T-cell (primary cell): ENCODE measurements at regions of chr1 and their contacts with region 1.

Region 1: DNA sequence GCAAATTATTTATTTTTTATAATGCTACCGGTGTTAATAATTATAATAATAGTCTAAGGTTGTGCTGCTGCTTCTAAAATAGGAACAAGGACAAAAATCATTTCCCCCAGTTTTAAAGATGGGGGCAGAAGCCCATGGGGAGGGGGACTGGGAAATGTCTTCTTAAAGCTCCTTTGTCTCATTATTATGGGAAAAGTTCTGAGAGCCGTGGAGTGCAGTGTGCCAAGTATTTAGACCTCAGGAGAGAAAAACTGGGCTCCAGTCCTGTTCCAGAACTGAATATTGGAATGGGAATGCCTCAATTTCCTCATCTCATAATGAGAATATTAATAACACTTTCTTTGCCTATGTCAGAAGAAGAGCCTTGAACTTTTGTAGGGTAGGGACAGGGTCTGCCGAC is 40.9 kb upstream of the ATF3 start:
- DNase-seq: no peak
- ATAC-seq: no peak
- H3K4me3 ChIP-seq: no peak overlapping the region
- H3K4me3 Mint-ChIP-seq: peak overlapping the region in 2 of 3 donors; percentile 82 to 90
- H3K27ac ChIP-seq: no peak overlapping the region
- H3K27ac Mint-ChIP-seq: no peak overlapping the region
- H3K4me1 ChIP-seq: peaks cover 3 to 9% of the 10 kb centered on the region in 2 experiments
- H3K4me1 Mint-ChIP-seq: peaks cover 15 to 21% (median 18%) of the 10 kb centered on the region in 3 donors
- H3K27me3 ChIP-seq: no peaks in the 10 kb centered on the region
- H3K27me3 Mint-ChIP-seq: no peaks in the 10 kb centered on the region

Region 2: DNA sequence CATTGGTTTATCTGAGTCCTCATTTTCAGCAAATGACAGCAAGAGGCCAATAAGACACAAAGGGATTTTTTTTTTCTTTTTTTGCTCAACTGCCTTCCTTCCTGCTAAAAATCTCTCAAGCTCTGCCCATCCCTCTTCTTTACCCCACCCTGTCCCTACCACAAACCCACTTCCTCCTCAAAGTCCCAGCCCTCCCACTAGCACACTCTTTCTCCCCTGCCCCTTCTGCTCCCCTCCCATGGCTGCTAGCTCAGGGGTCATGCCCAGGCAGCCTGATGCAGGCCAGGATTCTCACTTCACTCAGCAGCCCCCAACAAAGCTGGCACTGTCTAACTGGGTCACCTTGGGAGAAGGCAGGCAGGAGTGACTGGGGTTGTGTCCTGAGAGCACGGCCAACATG is 311.3 kb before region 1 on chr1:
- CTCF ChIA-PET with region 1: no interaction called
- POLR2A ChIA-PET with region 1: no interaction called
- DNase-seq: peak in 32 of 35 experiments; percentile 5 to 68 (median 22)
- ATAC-seq: peak; percentile 80 to 89 (median 82)
- H3K4me3 ChIP-seq: no peak overlapping the region
- H3K4me3 Mint-ChIP-seq: peak overlapping the region in 2 of 3 donors; percentile 44 to 81
- H3K27ac ChIP-seq: peak overlapping the region; percentile 64
- H3K27ac Mint-ChIP-seq: peak overlapping the region; percentile 76
- H3K4me1 ChIP-seq: peaks cover 36 to 59% of the 10 kb centered on the region in 2 experiments
- H3K4me1 Mint-ChIP-seq: peaks cover 69 to 89% (median 84%) of the 10 kb centered on the region in 3 donors
- H3K27me3 ChIP-seq: no peaks in the 10 kb centered on the region
- H3K27me3 Mint-ChIP-seq: no peaks in the 10 kb centered on the region

Region 3: GRCh38 chr1:212838145-212838544 is 270.5 kb after region 1 on chr1:
- CTCF ChIA-PET with region 1: no interaction called
- POLR2A ChIA-PET with region 1: interaction called in 1 of 2 experiments, 10 read pairs
- DNase-seq: no peak
- ATAC-seq: no peak
- H3K4me3 ChIP-seq: no peak overlapping the region
- H3K4me3 Mint-ChIP-seq: no peak overlapping the region
- H3K27ac ChIP-seq: no peak overlapping the region
- H3K27ac Mint-ChIP-seq: no peak overlapping the region
- H3K4me1 ChIP-seq: peaks cover 0 to 5% of the 10 kb centered on the region in 2 experiments
- H3K4me1 Mint-ChIP-seq: peaks cover 0 to 9% (median 4%) of the 10 kb centered on the region in 3 donors
- H3K27me3 ChIP-seq: no peaks in the 10 kb centered on the region
- H3K27me3 Mint-ChIP-seq: no peaks in the 10 kb centered on the region

Region 4: GRCh38 chr1:213061263-213061662 is 493.6 kb after region 1 on chr1:
- CTCF ChIA-PET with region 1: no interaction called
- POLR2A ChIA-PET with region 1: no interaction called
- DNase-seq: no peak
- ATAC-seq: no peak
- H3K4me3 ChIP-seq: no peak overlapping the region
- H3K4me3 Mint-ChIP-seq: no peak overlapping the region
- H3K27ac ChIP-seq: no peak overlapping the region
- H3K27ac Mint-ChIP-seq: no peak overlapping the region
- H3K4me1 ChIP-seq: no peaks in the 10 kb centered on the region
- H3K4me1 Mint-ChIP-seq: peaks cover 8 to 17% (median 11%) of the 10 kb centered on the region in 3 donors
- H3K27me3 ChIP-seq: no peaks in the 10 kb centered on the region
- H3K27me3 Mint-ChIP-seq: no peaks in the 10 kb centered on the region